AG04450 (cell line): ENCODE measurements at regions of chr13 and their contacts with region 1.

Region 1: GRCh38 chr13:59391696-59392095 is 772.0 kb downstream of the DIAPH3 start:
- DNase-seq: peak; percentile 51
- H3K4me3 ChIP-seq: no peak overlapping the region
- H3K27ac ChIP-seq: no peak overlapping the region
- H3K27me3 ChIP-seq: no peaks in the 10 kb centered on the region
- CTCF ChIP-seq: peak; percentile 98

Region 2: GRCh38 chr13:59437902-59438301 is 46.2 kb after region 1 on chr13:
- CTCF ChIA-PET with region 1: interaction called, 10 read pairs
- POLR2A ChIA-PET with region 1: no interaction called
- DNase-seq: no peak
- H3K4me3 ChIP-seq: no peak overlapping the region
- H3K27ac ChIP-seq: no peak overlapping the region
- H3K27me3 ChIP-seq: no peaks in the 10 kb centered on the region
- CTCF ChIP-seq: no peak

Region 3: DNA sequence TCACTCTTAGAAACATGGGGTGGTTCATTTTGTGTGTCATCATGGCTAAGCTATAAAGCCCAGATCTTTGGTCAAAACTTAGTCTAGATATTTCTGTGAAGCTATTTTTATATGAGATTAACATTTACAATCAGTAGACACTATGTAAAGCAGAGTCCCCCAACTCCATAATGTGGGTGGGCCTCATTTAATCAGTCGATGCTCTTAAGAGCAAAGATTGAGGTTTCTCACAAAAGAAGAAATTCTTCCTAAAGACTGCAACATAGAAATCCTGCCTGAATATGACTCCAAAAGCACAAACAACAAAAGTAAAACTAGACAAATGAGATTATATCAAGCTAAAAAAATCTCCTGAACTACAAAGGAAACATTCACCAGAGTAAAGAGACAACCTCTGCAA is 129.9 kb after region 1 on chr13:
- CTCF ChIA-PET with region 1: interaction called, 11 read pairs
- POLR2A ChIA-PET with region 1: no interaction called
- DNase-seq: no peak
- H3K4me3 ChIP-seq: no peak overlapping the region
- H3K27ac ChIP-seq: no peak overlapping the region
- H3K27me3 ChIP-seq: no peaks in the 10 kb centered on the region
- CTCF ChIP-seq: no peak

Region 4: DNA sequence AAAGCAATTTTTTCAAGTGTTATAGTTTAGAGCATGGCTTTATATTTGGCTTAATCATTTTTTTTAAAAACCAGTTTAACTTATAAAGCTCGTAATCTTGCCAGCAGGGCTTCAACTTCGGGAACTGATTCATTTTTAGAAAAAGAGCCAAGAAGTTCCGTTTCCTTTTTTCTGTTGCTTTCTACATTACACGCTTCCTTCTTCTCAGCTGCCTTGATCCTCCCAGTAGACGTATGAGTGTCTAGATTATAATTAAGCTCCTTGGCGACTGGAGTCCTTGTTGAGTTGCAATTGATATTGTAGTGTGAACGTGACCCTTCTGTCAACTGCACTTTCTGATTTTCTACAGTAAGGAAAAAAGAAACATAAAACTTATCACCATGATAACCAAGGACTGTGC is 274.8 kb after region 1 on chr13:
- CTCF ChIA-PET with region 1: interaction called, 339 read pairs
- POLR2A ChIA-PET with region 1: no interaction called
- DNase-seq: no peak
- H3K4me3 ChIP-seq: no peak overlapping the region
- H3K27ac ChIP-seq: no peak overlapping the region
- H3K27me3 ChIP-seq: no peaks in the 10 kb centered on the region
- CTCF ChIP-seq: no peak

Region 5: DNA sequence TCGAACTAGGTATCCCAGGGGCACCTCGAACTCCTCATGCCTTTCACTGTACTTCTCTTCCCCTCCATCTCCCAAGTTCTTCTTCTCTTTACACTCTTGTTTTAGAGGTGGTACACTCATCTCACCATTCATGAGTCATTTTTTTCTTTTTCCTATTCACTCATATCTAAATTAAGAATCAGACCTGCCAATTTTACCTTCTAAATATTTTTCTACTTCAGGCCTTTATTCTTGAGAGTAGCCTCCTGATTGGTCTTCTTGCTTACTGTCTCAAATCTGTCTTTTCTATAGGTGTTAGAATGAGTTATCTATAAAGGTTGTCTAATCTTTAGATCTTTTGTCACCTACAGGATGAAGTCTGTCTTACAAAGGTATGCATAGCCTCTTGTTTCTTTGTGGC is 1026.0 kb after region 1 on chr13:
- CTCF ChIA-PET with region 1: no interaction called
- POLR2A ChIA-PET with region 1: no interaction called
- DNase-seq: no peak
- H3K4me3 ChIP-seq: no peak overlapping the region
- H3K27ac ChIP-seq: no peak overlapping the region
- H3K27me3 ChIP-seq: no peaks in the 10 kb centered on the region
- CTCF ChIP-seq: no peak